ENCODE measurements at regions of chr3 and their contacts with region 1.

Region 1: GRCh38 chr3:106083207-106083606 is 214.4 kb upstream of the CBLB start:
- DNase-seq: no peak
- H3K4me3 Mint-ChIP-seq: no peak overlapping the region
- H3K27ac Mint-ChIP-seq: no peak overlapping the region
- H3K4me1 Mint-ChIP-seq: peaks cover 9% of the 10 kb centered on the region
- H3K27me3 Mint-ChIP-seq: no peaks in the 10 kb centered on the region

Region 2: DNA sequence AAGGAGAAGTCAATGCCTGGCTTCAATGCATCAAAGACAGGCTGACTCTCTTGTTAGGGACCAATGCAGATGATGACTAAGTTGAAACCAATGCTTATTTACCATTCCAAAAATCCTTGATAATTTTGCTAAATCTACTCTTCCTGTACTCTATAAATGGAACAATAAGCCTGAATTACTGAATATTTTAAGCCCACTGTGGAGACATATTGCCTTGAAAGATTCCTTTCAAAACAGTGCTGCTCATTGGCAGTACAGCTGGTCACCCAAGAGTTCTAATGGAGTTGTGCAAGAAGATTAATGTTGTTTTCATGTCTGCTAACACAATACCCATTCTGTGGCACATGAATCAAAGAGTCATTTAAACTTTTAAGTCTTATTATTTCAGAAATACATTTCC is 33.4 kb before region 1 on chr3:
- intact Hi-C with region 1: loop called (anchors 5 kb)
- DNase-seq: no peak
- H3K4me3 Mint-ChIP-seq: no peak overlapping the region
- H3K27ac Mint-ChIP-seq: no peak overlapping the region
- H3K4me1 Mint-ChIP-seq: peaks cover 9% of the 10 kb centered on the region
- H3K27me3 Mint-ChIP-seq: no peaks in the 10 kb centered on the region

Region 3: DNA sequence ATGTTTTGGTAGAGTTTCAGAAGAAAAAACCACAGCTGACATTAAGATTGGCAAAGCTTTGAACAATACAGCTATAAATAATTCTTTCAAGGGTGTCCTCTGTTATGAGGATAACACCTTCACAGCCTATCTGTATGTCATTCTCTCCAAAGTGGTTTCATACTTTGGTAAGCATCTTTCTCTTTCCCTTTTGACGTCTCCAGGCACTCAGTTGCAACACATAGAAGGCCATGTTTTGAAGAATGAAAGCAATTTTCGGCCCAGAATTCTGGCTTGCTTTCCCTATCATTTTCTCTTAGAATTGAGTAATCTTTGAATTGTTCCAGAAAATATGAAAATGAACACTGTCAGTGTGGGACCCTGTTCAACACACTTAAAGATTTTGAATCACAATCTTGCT is 14.4 kb before region 1 on chr3:
- intact Hi-C with region 1: no loop called
- DNase-seq: peak; percentile 74
- H3K4me3 Mint-ChIP-seq: peak overlapping the region; percentile 4
- H3K27ac Mint-ChIP-seq: peak overlapping the region; percentile 82
- H3K4me1 Mint-ChIP-seq: peaks cover 8% of the 10 kb centered on the region
- H3K27me3 Mint-ChIP-seq: no peaks in the 10 kb centered on the region

Measured in activated CD4-positive, alpha-beta T cell treated with anti-CD3 and anti-CD28 coated beads, Interleukin-2, amount 10 ng/mL, durations not matched to agents 24 days and 14 days (primary cell).